ENCODE measurements at regions of chr3 and their contacts with region 1.

Region 1: DNA sequence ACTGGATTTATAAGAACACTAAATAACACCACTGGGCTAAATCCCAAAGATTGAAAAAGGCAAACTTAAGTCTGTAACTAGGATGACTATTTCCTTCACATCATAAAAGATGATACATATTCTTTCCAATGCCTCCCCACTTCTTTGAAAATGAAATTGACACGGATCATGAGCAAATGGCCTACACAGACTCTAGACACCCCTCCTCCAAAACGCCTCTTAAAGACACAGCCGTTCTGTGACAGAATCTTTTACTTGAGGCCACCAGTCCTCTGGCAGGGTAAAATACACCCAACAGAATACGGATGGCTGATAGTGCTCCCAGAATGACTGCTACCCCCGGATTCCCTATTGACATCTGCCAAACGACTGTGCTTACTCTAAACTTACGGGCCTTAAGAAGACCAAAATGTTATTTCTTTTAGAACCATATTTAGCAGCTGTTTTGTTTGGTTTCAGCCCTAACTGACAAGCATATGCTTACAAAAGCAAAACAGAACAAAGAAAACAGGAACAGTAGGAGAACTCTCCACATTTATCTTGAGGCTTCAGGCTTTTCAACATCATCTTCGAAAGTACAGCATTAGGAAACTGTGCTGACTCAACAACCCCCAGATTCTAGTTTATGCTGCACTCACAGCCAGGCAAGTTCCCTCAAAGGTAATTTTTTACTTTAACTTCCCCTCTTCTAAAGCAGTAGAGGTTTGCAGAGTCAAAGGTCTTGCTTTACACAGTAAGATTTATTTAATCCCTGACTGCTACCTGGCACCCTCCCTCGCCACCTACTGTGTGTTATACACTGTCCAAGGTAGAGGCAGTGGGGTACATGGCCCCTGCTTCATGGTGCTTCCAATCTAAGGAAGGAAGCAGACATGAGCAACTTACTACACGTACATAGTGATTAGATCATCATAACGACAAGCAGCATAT is 84.3 kb downstream of the TNIK start:
- DNase-seq: peak; percentile 51
- H3K4me3 ChIP-seq: no peak overlapping the region
- H3K27ac ChIP-seq: peak overlapping the region; percentile 82
- H3K4me1 ChIP-seq: peaks cover 46% of the 10 kb centered on the region
- H3K27me3 ChIP-seq: no peaks in the 10 kb centered on the region
- CTCF ChIP-seq: no peak
- POLR2A ChIP-seq: no peak

Region 2: DNA sequence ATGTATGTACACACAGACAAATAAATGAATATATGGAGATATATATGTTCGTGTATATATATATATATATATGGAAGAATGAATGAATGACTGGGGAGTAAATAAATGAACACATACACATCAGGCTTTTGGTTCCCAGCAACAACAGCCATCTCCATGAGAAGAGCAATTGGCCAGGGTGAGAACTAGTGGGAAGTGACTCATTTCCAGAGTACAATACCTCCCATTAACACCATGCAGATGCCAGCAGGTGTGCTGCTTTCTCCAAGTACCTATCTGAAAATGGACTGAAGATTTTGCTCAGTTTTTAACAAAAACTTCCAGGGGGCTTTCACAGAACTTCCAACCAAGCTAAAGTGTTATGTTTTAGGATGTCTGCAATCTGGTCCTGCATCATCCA is 169.6 kb before region 1 on chr3:
- CTCF ChIA-PET with region 1: interaction called, 7 read pairs
- POLR2A ChIA-PET with region 1: no interaction called
- dilution Hi-C with region 1: no loop called
- intact Hi-C with region 1: loop called (anchors 1 kb)
- DNase-seq: peak; percentile 74
- H3K4me3 ChIP-seq: no peak overlapping the region
- H3K27ac ChIP-seq: peak overlapping the region; percentile 91
- H3K4me1 ChIP-seq: peaks cover 39% of the 10 kb centered on the region
- H3K27me3 ChIP-seq: no peaks in the 10 kb centered on the region
- CTCF ChIP-seq: no peak
- POLR2A ChIP-seq: no peak

Region 3: GRCh38 chr3:171225708-171226107 is 150.2 kb before region 1 on chr3:
- CTCF ChIA-PET with region 1: no interaction called
- POLR2A ChIA-PET with region 1: no interaction called
- dilution Hi-C with region 1: no loop called
- intact Hi-C with region 1: no loop called
- DNase-seq: peak; percentile 63
- H3K4me3 ChIP-seq: no peak overlapping the region
- H3K27ac ChIP-seq: no peak overlapping the region
- H3K4me1 ChIP-seq: no peaks in the 10 kb centered on the region
- H3K27me3 ChIP-seq: no peaks in the 10 kb centered on the region
- CTCF ChIP-seq: no peak
- POLR2A ChIP-seq: no peak

Region 4: GRCh38 chr3:171358181-171358880 is 17.6 kb before region 1 on chr3:
- CTCF ChIA-PET with region 1: interaction called, 4 read pairs
- POLR2A ChIA-PET with region 1: no interaction called
- dilution Hi-C with region 1: no loop called
- intact Hi-C with region 1: loop called (anchors 2 kb)
- DNase-seq: peak; percentile 41
- H3K4me3 ChIP-seq: no peak overlapping the region
- H3K27ac ChIP-seq: peak overlapping the region; percentile 21
- H3K4me1 ChIP-seq: peaks cover 42% of the 10 kb centered on the region
- H3K27me3 ChIP-seq: no peaks in the 10 kb centered on the region
- CTCF ChIP-seq: no peak
- POLR2A ChIP-seq: no peak